ENCODE measurements at regions of chr1 and their contacts with region 1.

Region 1: GRCh38 chr1:26321315-26322041 is 3.7 kb downstream of the CD52 start:
- DNase-seq: peak; percentile 83 to 87 (median 86)
- H3K4me3 ChIP-seq: peak overlapping the region in 1 of 3 experiments; percentile 83
- H3K4me3 Mint-ChIP-seq: peak overlapping the region; percentile 83 to 90
- H3K27ac ChIP-seq: peak overlapping the region; percentile 7 to 92
- H3K27ac Mint-ChIP-seq: peak overlapping the region; percentile 88 to 97 (median 96)
- H3K4me1 ChIP-seq: peaks cover 55 to 59% of the 10 kb centered on the region in 2 donors
- H3K4me1 Mint-ChIP-seq: peaks cover 63% of the 10 kb centered on the region
- H3K27me3 ChIP-seq: no peaks in the 10 kb centered on the region
- H3K27me3 Mint-ChIP-seq: peaks cover 0 to 2% (median 1%) of the 10 kb centered on the region in 3 donors
- CTCF ChIP-seq: peak; percentile 89

Region 2: GRCh38 chr1:26111530-26112406 is 209.7 kb before region 1 on chr1 and contains the start of gene PDIK1L:
- intact Hi-C with region 1: loop called (anchors 5 to 10 kb)
- DNase-seq: peak; percentile 90 to 96 (median 96)
- H3K4me3 ChIP-seq: peak within 1 kb of the TSS; percentile 84 to 99 (median 99)
- H3K4me3 Mint-ChIP-seq: peak within 1 kb of the TSS; percentile 91 to 96
- H3K27ac ChIP-seq: peak within 1 kb of the TSS; percentile 72 to 86
- H3K27ac Mint-ChIP-seq: peak within 1 kb of the TSS; percentile 85 to 93 (median 90)
- H3K4me1 ChIP-seq: peaks cover 18 to 25% of the 10 kb centered on the region in 2 donors
- H3K4me1 Mint-ChIP-seq: peaks cover 17% of the 10 kb centered on the region
- H3K27me3 ChIP-seq: no peaks in the 10 kb centered on the region
- H3K27me3 Mint-ChIP-seq: peaks cover 0 to 3% (median 2%) of the 10 kb centered on the region in 3 donors
- CTCF ChIP-seq: no peak
- polyA plus RNA-seq, gene PDIK1L: 1.2 to 2.5 (median 2.3) TPM

Region 3: GRCh38 chr1:26169669-26170471 is 151.6 kb before region 1 on chr1 and contains the start of gene ZNF593:
- intact Hi-C with region 1: loop called (anchors 2 to 5 kb)
- DNase-seq: peak; percentile 89 to 95 (median 94)
- H3K4me3 ChIP-seq: peak within 1 kb of the TSS; percentile 59 to 93 (median 68)
- H3K4me3 Mint-ChIP-seq: peak within 1 kb of the TSS; percentile 89 to 90
- H3K27ac ChIP-seq: peak within 1 kb of the TSS in 1 of 2 donors; percentile 81
- H3K27ac Mint-ChIP-seq: peak within 1 kb of the TSS; percentile 59 to 94 (median 88)
- H3K4me1 ChIP-seq: peaks cover 14 to 19% of the 10 kb centered on the region in 2 donors
- H3K4me1 Mint-ChIP-seq: peaks cover 13% of the 10 kb centered on the region
- H3K27me3 ChIP-seq: peaks cover 0 to 6% of the 10 kb centered on the region in 2 donors
- H3K27me3 Mint-ChIP-seq: peaks cover 8 to 13% (median 11%) of the 10 kb centered on the region in 3 donors
- CTCF ChIP-seq: peak; percentile 90
- polyA plus RNA-seq, gene ZNF593: 23.6 to 36.5 (median 27.8) TPM

Region 4: DNA sequence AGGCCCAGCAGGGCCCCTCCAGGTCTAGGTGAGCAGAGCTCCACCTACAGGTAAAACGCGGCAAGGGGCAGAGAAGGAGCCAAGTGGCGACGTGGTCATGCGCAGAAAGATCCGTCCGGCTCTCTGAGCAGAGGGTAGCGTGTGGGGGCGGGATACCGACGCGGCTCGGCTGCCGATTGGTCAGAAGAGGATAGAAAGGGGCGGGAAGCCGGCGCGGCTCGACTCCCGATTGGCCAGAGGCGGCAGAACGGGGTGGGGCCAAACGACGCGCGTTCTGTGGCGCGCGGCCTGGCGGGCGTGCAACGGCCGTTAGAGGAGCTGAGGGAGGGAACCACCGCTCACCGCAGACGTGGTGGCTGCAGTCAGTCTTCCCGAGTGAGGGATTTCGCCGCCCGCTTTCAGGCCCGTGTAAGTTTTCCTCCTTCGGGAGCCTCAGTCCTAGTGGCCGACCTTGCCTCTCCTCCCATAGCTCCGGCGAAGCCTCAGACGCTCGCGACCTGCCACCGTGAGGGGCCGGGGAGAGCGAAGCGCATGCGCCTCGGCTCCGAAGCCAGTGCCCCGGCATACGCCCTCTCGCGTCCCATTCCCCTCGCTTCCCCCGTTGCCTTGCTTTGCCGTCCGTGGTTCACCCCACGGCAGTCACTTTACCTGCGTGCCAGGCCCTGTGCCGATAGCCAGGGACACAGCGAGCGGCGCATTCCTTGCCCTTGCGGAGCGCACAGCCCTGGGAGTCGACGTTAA is 87.4 kb before region 1 on chr1 and contains the start of gene CEP85:
- intact Hi-C with region 1: loop called in 1 of 2 experiments (anchors 2 kb)
- DNase-seq: peak; percentile 95 to 97 (median 97)
- H3K4me3 ChIP-seq: peak within 1 kb of the TSS; percentile 65 to 98 (median 81)
- H3K4me3 Mint-ChIP-seq: peak within 1 kb of the TSS; percentile 99
- H3K27ac ChIP-seq: peak within 1 kb of the TSS; percentile 70 to 98
- H3K27ac Mint-ChIP-seq: peak within 1 kb of the TSS; percentile 91 to 97 (median 96)
- H3K4me1 ChIP-seq: peaks cover 29 to 39% of the 10 kb centered on the region in 2 donors
- H3K4me1 Mint-ChIP-seq: peaks cover 32% of the 10 kb centered on the region
- H3K27me3 ChIP-seq: no peaks in the 10 kb centered on the region
- H3K27me3 Mint-ChIP-seq: peaks cover 0 to 2% (median 2%) of the 10 kb centered on the region in 3 donors
- CTCF ChIP-seq: peak; percentile 52
- polyA plus RNA-seq, gene CEP85: 8.2 to 32.5 (median 10.9) TPM

Region 5: GRCh38 chr1:26279456-26280332 is 41.8 kb before region 1 on chr1 and contains the start of gene SH3BGRL3:
- intact Hi-C with region 1: loop called (anchors 1 to 2 kb)
- DNase-seq: peak; percentile 87 to 90 (median 88)
- H3K4me3 ChIP-seq: peak within 1 kb of the TSS; percentile 74 to 93 (median 83)
- H3K4me3 Mint-ChIP-seq: peak within 1 kb of the TSS; percentile 91 to 92
- H3K27ac ChIP-seq: peak within 1 kb of the TSS; percentile 99 to 100
- H3K27ac Mint-ChIP-seq: peak within 1 kb of the TSS; percentile 96 to 100 (median 100)
- H3K4me1 ChIP-seq: peaks cover 93 to 94% of the 10 kb centered on the region in 2 donors
- H3K4me1 Mint-ChIP-seq: peaks cover 88% of the 10 kb centered on the region
- H3K27me3 ChIP-seq: no peaks in the 10 kb centered on the region
- H3K27me3 Mint-ChIP-seq: peaks cover 0 to 7% (median 2%) of the 10 kb centered on the region in 3 donors
- CTCF ChIP-seq: no peak
- polyA plus RNA-seq, gene SH3BGRL3: 478 to 1,744 (median 1,706) TPM

Region 6: GRCh38 chr1:26284597-26285360 is 36.7 kb before region 1 on chr1:
- intact Hi-C with region 1: loop called (anchors 1 to 2 kb)
- DNase-seq: peak; percentile 96 to 99 (median 98)
- H3K4me3 ChIP-seq: peak overlapping the region in 1 of 3 experiments; percentile 41
- H3K4me3 Mint-ChIP-seq: peak overlapping the region; percentile 70 to 86
- H3K27ac ChIP-seq: peak overlapping the region; percentile 99 to 100
- H3K27ac Mint-ChIP-seq: peak overlapping the region; percentile 96 to 100 (median 100)
- H3K4me1 ChIP-seq: peaks cover 94 to 95% of the 10 kb centered on the region in 2 donors
- H3K4me1 Mint-ChIP-seq: peaks cover 90% of the 10 kb centered on the region
- H3K27me3 ChIP-seq: no peaks in the 10 kb centered on the region
- H3K27me3 Mint-ChIP-seq: peaks cover 0 to 9% (median 4%) of the 10 kb centered on the region in 3 donors
- CTCF ChIP-seq: peak; percentile 87

Region 7: DNA sequence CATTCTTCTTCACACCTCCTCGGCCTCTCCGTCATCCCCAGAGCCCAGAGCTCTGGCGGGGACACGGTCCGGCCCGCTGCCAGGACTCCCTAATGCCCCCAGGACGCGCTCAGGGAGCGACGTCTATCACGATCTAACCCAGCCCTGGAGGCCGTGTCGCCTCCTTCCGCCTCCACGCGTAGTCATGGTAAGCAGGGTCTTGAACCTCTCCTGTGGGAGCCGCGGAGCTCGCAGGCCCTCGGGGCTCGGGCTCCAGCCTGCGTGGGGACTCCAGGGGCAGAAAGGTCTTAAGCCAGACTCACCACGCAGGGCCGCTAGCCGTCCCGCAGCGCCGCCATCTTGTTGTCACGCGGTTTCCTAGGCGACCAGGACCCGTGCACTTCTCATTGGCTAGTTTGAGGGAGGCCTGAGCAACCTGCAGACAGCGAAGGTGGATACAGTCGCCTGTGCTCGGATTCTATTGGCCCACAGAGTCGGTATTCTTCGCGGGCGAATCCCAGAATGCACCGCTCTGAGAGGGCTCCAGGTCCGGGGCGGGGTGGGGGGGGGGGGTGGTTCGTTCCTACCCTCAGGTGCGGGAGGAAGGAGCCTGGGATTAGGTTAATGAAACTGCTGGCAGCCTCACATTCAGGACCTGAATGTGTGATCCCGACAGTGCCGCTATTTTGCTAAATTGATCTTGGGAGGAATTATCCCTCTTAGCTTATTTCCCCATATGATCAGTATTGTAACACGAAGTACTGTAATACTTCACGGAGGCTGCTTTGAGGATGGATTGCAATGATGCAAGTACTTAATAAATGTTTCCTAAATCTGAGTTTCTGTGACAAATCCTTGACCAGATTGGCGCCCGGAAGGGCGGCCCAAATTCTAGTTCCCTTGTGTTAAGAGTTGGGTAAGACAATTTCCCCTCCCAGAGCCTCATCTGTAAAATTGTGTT is 14.9 kb before region 1 on chr1 and contains the start of gene UBXN11:
- intact Hi-C with region 1: loop called (anchors 1 kb)
- DNase-seq: peak; percentile 91 to 98 (median 92)
- H3K4me3 ChIP-seq: peak within 1 kb of the TSS; percentile 58 to 83 (median 71)
- H3K4me3 Mint-ChIP-seq: peak within 1 kb of the TSS; percentile 95 to 98
- H3K27ac ChIP-seq: peak within 1 kb of the TSS; percentile 91 to 97
- H3K27ac Mint-ChIP-seq: peak within 1 kb of the TSS; percentile 95 to 100 (median 100)
- H3K4me1 ChIP-seq: peaks cover 79 to 91% of the 10 kb centered on the region in 2 donors
- H3K4me1 Mint-ChIP-seq: peaks cover 77% of the 10 kb centered on the region
- H3K27me3 ChIP-seq: no peaks in the 10 kb centered on the region
- H3K27me3 Mint-ChIP-seq: peaks cover 0 to 7% (median 0%) of the 10 kb centered on the region in 3 donors
- CTCF ChIP-seq: no peak
- polyA plus RNA-seq, gene UBXN11: 48.0 to 885 (median 52.1) TPM

Measured in CD14-positive monocyte (primary cell).